Astrocyte of the cerebellum (primary cell): ENCODE measurements at regions of chr5 and their contacts with region 1.

Region 1: GRCh38 chr5:33299621-33300208 is 141.1 kb upstream of the TARS1 start:
- DNase-seq: no peak
- H3K4me3 ChIP-seq: no peak overlapping the region
- CTCF ChIP-seq: peak; percentile 49

Region 2: DNA sequence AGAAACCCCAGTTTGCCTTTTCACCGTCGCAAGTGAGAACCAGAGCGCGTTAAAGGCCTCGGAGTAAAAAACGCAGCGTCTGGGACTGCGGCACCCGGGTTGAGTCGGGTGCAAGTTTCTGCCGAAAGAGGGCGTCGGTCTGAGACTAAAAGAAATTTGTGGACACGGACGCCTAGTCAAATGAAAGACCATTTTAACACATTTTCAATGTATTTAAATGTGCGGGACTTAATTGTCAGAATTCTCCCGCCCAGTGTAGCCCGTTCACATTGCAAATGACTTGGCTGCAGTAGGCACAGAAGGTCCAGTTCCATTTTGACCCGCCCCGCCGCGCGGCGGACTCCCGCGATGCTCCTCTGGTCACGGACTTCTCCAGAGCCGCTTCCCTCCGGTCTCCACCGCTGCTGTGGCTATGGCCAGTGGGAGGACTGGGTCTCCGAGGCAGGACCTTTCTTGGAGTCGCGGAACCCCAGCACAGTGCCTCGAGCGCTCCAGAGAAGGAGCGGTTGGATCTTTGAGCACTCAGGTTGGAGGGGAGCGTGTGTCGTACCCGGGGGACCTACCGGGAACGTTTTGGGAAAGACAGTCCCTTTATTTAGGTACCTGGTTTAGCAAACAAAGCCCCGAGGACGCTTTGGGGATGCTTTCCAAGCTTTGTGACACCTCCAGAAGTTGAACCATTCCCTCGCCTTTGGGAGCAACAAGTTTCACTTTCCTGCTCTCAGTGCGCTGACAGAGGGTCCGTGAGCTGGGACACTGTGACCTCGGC is 589.8 kb before region 1 on chr5:
- in situ Hi-C with region 1: loop called (anchors 25 kb)
- DNase-seq: peak; percentile 46
- H3K4me3 ChIP-seq: peak overlapping the region; percentile 62
- CTCF ChIP-seq: peak; percentile 85

Region 3: DNA sequence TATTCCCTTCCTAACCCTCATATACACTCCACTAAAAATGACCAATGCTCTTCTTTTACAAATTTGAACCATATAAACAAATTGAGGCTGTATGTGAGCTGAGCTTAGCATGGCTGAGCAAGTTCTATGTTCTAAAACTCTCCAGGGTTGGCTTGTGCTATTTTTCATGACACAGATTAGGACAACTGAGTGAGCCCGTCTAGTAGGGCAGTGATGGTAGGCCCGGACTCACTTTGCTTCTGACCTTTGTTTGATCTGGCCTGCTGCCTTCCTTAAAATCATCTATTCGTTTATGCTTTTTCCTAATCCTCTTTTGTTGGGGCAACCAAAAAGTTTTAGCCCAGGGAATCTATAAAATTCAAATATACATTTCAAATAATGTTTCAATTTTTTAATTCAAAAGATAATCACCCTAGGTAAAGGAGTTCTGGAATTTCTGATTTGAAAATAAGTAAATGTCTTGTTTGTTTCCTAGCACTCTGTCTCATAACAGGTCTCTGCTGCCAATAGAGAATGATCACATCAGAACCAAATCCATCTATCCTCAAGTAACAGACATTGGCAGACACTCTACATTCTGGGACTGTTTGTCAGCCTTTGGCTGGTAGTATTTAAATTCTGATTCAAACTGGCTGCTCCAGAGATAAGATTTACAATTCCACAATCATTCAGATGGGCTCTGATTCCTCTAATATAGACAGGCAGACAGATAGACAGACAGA is 76.0 kb before region 1 on chr5:
- in situ Hi-C with region 1: no loop called
- DNase-seq: no peak
- H3K4me3 ChIP-seq: no peak overlapping the region
- CTCF ChIP-seq: no peak